Mammary epithelial cell (primary cell): ENCODE measurements at regions of chr1 and their contacts with region 1.

Region 1: DNA sequence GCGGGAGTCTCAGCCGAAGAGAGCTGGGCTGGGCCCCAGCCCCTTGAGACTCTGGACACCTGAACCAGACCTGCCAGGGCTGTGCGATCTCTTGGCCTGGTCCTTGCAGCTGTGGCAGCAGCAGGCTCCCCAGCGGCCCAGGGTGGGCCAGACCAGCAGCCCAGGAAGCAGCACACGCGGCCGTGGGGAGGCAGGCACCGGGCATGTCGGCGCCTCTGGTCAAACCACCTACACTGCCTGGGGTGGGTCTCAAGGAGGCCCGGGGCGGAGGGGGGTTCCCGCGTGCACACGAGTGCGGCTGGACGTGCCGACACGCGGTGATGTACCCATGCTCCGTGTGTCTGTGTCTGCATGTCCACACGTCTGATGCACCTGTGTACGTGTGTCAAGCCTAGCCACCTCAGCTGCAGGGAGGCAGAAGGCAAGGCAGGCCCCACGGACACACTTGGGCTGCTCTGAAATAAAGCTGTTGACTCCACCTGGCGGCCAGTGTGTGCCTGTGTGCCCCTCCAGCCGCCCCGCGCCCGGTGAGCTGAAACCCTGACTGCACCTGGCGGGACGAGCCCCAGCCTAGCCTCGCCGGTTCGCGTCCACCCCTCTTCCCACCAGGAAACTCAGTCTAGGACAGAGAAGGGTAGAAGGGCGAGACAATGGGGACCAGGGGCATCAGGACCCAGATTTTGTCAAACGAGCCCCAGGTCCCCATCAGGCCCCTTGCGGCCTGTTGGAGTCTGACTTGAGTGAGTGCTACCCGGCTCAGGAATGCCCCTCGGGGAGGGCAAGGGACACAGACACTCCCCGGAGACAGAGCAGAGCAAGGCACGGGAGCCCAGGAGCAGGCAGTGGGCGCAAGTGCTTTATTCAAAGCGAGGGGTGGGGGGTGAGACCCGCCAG is 11.6 kb downstream of the SCNN1D start:
- DNase-seq: peak; percentile 61
- H3K4me3 ChIP-seq: no peak overlapping the region
- H3K27ac ChIP-seq: no peak overlapping the region
- H3K4me1 ChIP-seq: peaks cover 9% of the 10 kb centered on the region
- H3K27me3 ChIP-seq: no peaks in the 10 kb centered on the region
- CTCF ChIP-seq: peak; percentile 68 to 70

Region 2: GRCh38 chr1:869499-870244 is 422.1 kb before region 1 on chr1:
- CTCF ChIA-PET with region 1: no interaction called
- dilution Hi-C with region 1: no loop called
- in situ Hi-C with region 1: no loop called
- intact Hi-C with region 1: loop called (anchors 5 kb)
- DNase-seq: peak; percentile 25
- H3K4me3 ChIP-seq: no peak overlapping the region
- H3K27ac ChIP-seq: no peak overlapping the region
- H3K4me1 ChIP-seq: no peaks in the 10 kb centered on the region
- H3K27me3 ChIP-seq: peaks cover 2% of the 10 kb centered on the region
- CTCF ChIP-seq: peak; percentile 40 to 68

Region 3: GRCh38 chr1:999725-1000356 is 292.0 kb before region 1 on chr1 and contains the start of gene HES4:
- CTCF ChIA-PET with region 1: no interaction called
- dilution Hi-C with region 1: no loop called
- in situ Hi-C with region 1: loop called in 1 of 2 experiments (anchors 25 kb)
- intact Hi-C with region 1: no loop called
- DNase-seq: peak; percentile 82
- H3K4me3 ChIP-seq: peak within 1 kb of the TSS; percentile 42 to 54 (median 50)
- H3K27ac ChIP-seq: peak within 1 kb of the TSS; percentile 45
- H3K4me1 ChIP-seq: peaks cover 30% of the 10 kb centered on the region
- H3K27me3 ChIP-seq: peaks cover 17% of the 10 kb centered on the region
- CTCF ChIP-seq: no peak
- total RNA-seq, gene HES4: 6.4 to 24.7 TPM

Region 4: GRCh38 chr1:1101503-1101902 is 190.3 kb before region 1 on chr1:
- CTCF ChIA-PET with region 1: interaction called, 13 read pairs
- dilution Hi-C with region 1: no loop called
- in situ Hi-C with region 1: no loop called
- intact Hi-C with region 1: no loop called
- DNase-seq: no peak
- H3K4me3 ChIP-seq: no peak overlapping the region
- H3K27ac ChIP-seq: no peak overlapping the region
- H3K4me1 ChIP-seq: no peaks in the 10 kb centered on the region
- H3K27me3 ChIP-seq: no peaks in the 10 kb centered on the region
- CTCF ChIP-seq: no peak

Region 5: DNA sequence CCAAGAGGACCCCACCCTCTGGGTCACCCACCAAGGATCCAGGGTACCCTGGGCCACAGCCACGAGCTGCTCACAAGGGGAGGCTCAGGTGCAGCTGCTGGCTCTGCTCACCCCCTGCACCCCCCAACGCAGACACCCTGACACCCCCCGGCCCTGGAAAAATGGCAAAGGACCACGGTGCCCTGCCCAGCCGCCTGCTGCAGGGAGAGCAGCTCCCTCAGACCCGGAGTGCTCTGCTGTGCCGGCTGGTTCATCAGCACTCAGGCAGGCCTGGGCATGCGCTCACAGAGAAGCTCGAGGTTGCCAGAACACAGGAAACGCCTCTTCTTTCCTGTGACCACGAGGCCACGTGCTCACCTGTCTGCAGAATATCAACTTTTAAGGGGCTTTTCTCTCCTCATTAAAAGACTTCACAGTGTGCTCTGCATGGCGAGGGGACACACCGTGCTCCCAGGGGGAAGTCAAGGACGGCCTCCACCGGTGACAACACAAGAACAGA is 41.0 kb before region 1 on chr1:
- CTCF ChIA-PET with region 1: no interaction called
- dilution Hi-C with region 1: no loop called
- in situ Hi-C with region 1: no loop called
- intact Hi-C with region 1: loop called (anchors 2 kb)
- DNase-seq: peak; percentile 83
- H3K4me3 ChIP-seq: no peak overlapping the region
- H3K27ac ChIP-seq: peak overlapping the region; percentile 22
- H3K4me1 ChIP-seq: peaks cover 10% of the 10 kb centered on the region
- H3K27me3 ChIP-seq: no peaks in the 10 kb centered on the region
- CTCF ChIP-seq: no peak